ENCODE measurements at regions of chr7 and their contacts with region 1.

Region 1: GRCh38 chr7:5526100-5526905 is 102.7 kb upstream of the TNRC18 start:
- DNase-seq: peak; percentile 58
- H3K4me3 Mint-ChIP-seq: peak overlapping the region; percentile 99
- H3K27ac Mint-ChIP-seq: peak overlapping the region; percentile 95
- H3K4me1 Mint-ChIP-seq: peaks cover 30% of the 10 kb centered on the region
- H3K27me3 Mint-ChIP-seq: no peaks in the 10 kb centered on the region

Region 2: GRCh38 chr7:5423844-5424688 is 102.2 kb before region 1 on chr7:
- CTCF ChIA-PET with region 1: no interaction called
- intact Hi-C with region 1: loop called (anchors 1 kb)
- DNase-seq: peak; percentile 62
- H3K4me3 Mint-ChIP-seq: peak overlapping the region; percentile 67
- H3K27ac Mint-ChIP-seq: peak overlapping the region; percentile 24
- H3K4me1 Mint-ChIP-seq: peaks cover 43% of the 10 kb centered on the region
- H3K27me3 Mint-ChIP-seq: peaks cover 64% of the 10 kb centered on the region